PC-9 (cell line): ENCODE measurements at regions of chr7 and their contacts with region 1.

Region 1: DNA sequence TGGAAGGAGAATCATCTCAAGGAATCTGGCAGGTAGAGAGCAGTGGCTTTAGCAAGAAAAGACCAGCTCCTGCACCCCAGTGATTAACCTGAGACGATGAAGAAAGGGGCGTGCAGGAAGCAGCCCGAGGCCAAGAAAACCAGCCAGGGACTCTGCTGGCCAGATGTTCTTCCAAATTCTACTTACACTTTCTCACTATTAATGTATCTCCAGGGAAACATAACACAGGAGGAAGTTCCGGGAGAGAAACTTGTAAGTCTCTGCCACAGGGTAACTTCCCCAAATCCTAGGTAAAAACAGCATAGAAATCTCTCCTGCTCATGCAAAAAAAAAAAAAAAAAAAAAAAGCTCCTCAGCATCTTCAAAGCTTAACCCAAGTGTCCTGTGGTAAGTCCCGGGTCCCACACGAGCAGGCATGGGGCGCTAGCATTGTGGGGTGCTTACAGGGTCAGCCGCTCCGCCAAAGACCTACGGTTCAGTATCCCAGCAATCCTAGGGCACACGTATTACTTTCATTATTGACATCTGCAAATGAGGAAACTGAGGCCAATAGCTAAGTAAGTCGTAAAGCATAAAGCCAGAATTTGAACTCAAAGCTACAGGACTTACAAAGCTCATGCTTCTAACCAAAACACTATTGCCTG is 97.2 kb upstream of the GNA12 start:
- DNase-seq: no peak
- H3K4me3 ChIP-seq: no peak overlapping the region
- H3K27ac ChIP-seq: no peak overlapping the region
- H3K4me1 ChIP-seq: 0 out of 2 replicates have a peak, but pooled peaks cover 5% of the 10 kb centered on the region
- H3K27me3 ChIP-seq: no peaks in the 10 kb centered on the region
- CTCF ChIP-seq: no peak

Region 2: GRCh38 chr7:2800931-2801688 is 140.2 kb before region 1 on chr7:
- CTCF ChIA-PET with region 1: no interaction called
- POLR2A ChIA-PET with region 1: no interaction called
- intact Hi-C with region 1: no loop called
- DNase-seq: peak in 1 of 2 experiments; percentile 19
- H3K4me3 ChIP-seq: peak overlapping the region; percentile 55; the same call in 1 of the 2 replicates
- H3K27ac ChIP-seq: peak overlapping the region; percentile 94
- H3K4me1 ChIP-seq: peaks cover 58% of the 10 kb centered on the region
- H3K27me3 ChIP-seq: no peaks in the 10 kb centered on the region
- CTCF ChIP-seq: no peak

Region 3: GRCh38 chr7:2856388-2857169 is 84.8 kb before region 1 on chr7:
- CTCF ChIA-PET with region 1: no interaction called
- POLR2A ChIA-PET with region 1: no interaction called
- intact Hi-C with region 1: no loop called
- DNase-seq: peak in 1 of 2 experiments; percentile 49
- H3K4me3 ChIP-seq: no peak overlapping the region
- H3K27ac ChIP-seq: no peak overlapping the region
- H3K4me1 ChIP-seq: 0 out of 2 replicates have a peak, but pooled peaks cover 6% of the 10 kb centered on the region
- H3K27me3 ChIP-seq: no peaks in the 10 kb centered on the region
- CTCF ChIP-seq: no peak

Region 4: GRCh38 chr7:2962865-2963264 is 21.5 kb after region 1 on chr7:
- CTCF ChIA-PET with region 1: no interaction called
- POLR2A ChIA-PET with region 1: interaction called, 11 read pairs
- intact Hi-C with region 1: no loop called
- DNase-seq: no peak
- H3K4me3 ChIP-seq: no peak overlapping the region
- H3K27ac ChIP-seq: peak overlapping the region; percentile 18; the same call in 1 of the 2 replicates
- H3K4me1 ChIP-seq: peaks cover 12% of the 10 kb centered on the region
- H3K27me3 ChIP-seq: no peaks in the 10 kb centered on the region
- CTCF ChIP-seq: no peak

Region 5: GRCh38 chr7:4010061-4010605 is 1068.8 kb after region 1 on chr7:
- CTCF ChIA-PET with region 1: no interaction called
- POLR2A ChIA-PET with region 1: no interaction called
- intact Hi-C with region 1: no loop called
- DNase-seq: no peak
- H3K4me3 ChIP-seq: no peak overlapping the region
- H3K27ac ChIP-seq: no peak overlapping the region
- H3K4me1 ChIP-seq: no peaks in the 10 kb centered on the region
- H3K27me3 ChIP-seq: peaks cover 99% of the 10 kb centered on the region
- CTCF ChIP-seq: no peak